ENCODE measurements at regions of chr4 and their contacts with region 1.

Region 1: DNA sequence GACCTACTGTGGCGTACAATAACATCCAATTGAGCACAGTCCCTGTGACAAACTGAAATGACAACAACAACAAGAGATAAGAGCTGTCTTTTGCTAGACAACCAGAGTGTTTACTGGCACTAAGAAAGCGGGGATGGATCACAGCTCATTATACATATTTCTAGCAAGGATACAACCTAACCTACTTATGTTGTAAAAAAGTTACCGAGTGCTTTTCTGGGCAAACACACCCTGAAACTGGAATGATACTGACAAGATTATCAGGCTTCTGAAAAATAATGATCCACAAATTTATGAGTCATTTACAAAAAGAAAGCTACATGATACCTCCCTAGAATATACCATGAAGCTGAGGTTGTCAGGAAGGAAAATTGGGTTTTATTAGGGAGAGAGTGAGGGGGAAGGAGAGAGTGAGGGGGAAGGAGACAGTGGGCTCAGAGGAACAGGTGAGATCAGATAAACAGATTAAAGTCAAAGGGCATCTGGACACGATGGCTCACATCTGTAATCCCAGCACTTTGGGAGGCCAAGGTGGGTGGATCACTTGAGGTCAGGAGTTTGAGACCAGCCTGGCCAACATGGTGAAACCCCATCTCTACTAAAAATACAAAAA is 20.3 kb downstream of the TBC1D9 start:
- DNase-seq: no peak
- CTCF ChIP-seq: no peak

Region 2: GRCh38 chr4:140720387-140721304 is 15.2 kb before region 1 on chr4:
- CTCF ChIA-PET with region 1: interaction called, 33 read pairs
- POLR2A ChIA-PET with region 1: no interaction called
- DNase-seq: no peak
- CTCF ChIP-seq: no peak

Region 3: DNA sequence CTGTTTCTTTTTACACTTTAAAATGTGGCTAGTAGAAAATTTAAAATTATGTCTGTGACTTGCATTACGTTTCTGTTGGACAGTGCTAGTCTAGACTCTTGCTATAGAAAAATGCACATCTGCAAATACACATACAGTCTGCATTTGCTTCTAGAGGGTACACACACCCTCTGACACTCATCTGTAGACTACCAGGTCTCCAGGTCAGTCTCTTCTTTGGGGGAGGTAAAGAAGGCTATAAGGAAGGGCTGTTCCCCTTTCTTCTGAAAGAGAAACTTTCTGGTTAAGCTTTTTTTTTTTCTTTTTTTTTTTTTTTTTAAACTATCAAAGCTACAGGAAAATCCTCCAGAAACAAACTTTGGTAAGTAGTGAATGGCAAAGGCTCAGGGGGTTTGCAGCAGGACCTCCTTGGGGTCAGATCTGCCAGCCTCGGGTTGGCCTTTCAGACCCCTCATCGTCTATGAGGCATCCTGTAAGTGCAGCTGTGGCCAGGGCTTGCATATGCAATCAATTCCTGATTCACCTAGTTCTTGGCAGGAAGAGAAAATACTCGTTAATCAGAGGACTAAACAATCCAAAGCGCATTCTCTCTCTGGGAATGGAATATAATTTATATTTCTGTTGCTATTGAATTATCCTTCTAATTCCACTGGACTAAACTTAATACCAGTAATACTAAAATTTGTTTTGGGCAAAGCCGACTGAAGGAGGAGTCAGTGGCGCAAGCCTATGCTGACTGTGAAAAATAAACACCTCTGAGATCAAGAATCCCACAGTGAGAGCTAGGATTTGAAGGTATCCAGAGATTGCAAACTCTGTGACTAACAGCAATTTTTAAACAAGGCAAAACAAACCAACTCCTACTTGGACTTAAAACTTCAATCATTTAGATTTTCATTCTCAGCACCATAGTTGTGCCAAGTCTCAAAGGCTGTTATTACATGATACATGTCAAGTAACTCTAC is 129.7 kb after region 1 on chr4:
- CTCF ChIA-PET with region 1: no interaction called
- POLR2A ChIA-PET with region 1: no interaction called
- DNase-seq: no peak
- CTCF ChIP-seq: no peak

Measured in GM10248 (cell line).